Naive thymus-derived CD4-positive, alpha-beta T cell (primary cell): ENCODE measurements at regions of chr13 and their contacts with region 1.

Region 1: DNA sequence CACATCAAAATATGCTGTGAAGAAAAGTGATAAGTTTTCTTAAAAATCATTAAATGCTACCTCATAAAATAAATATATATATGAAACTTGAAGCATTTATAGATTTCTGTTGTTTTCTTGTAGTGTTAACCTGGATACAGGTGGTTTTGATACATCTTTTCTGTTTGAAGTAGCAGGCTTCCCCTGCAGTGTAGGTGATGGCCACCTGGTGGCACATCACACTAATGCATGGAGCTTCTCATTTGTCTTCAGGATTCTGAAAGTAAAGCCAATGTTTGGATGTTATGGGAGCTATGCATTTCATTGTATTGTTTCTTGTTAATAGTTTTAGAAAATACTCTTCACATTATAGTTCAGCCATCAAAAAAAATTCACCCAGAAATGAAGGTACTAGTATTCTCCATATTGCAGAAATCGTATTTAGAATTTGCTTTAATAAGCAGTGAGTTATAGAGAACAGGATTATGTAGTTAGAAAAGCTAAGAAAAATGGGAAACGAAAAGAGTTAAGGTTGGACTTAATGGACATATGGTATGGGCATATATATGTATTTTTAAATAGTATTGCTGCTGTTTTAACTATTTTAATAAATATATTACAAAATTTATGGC is 18.7 kb downstream of the GPR180 start:
- DNase-seq: peak in 3 of 9 donors; percentile 19 to 32 (median 26)
- ATAC-seq: peak; percentile 73
- H3K4me3 ChIP-seq: no peak overlapping the region
- H3K4me3 Mint-ChIP-seq: no peak overlapping the region
- H3K27ac ChIP-seq: no peak overlapping the region
- H3K27ac Mint-ChIP-seq: peak overlapping the region in 1 of 9 donors; percentile 8
- H3K4me1 ChIP-seq: no peaks in the 10 kb centered on the region
- H3K4me1 Mint-ChIP-seq: peaks cover 0 to 16% (median 13%) of the 10 kb centered on the region in 7 donors
- H3K27me3 ChIP-seq: no peaks in the 10 kb centered on the region
- H3K27me3 Mint-ChIP-seq: no peaks in the 10 kb centered on the region

Region 2: DNA sequence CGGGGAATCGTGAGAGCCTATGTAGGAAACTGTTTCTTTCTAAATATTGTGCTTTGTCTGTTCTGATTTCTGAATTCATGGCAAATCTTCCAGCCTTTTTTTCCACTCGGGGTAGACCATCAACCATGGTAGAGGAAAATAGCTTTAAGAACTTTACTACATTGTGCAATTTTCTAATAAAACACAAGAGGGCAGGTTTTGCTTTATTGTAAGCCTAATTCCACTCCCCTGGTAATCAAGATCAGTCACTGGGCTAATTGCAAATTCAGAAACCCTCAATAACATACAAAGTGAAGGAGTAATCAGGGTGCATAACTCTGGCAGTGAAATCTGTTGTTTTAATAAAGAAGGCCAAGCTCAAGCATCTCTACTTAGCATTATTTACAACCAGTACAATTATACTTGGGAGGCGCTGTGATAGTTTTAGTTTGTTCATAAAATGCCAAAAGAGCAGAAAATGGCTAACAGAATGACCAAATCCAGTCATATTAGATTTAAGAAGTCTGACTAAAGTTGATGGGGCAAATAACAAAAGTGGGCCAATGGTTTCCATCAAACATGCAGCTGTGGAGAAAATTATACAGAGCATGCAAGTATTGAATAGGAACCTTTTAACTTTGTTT is 184.7 kb before region 1 on chr13:
- CTCF ChIA-PET with region 1: interaction called, 273 read pairs
- POLR2A ChIA-PET with region 1: interaction called, 4 read pairs
- intact Hi-C with region 1: loop called (anchors 1 kb)
- DNase-seq: peak in 7 of 9 donors; percentile 18 to 63 (median 50)
- ATAC-seq: peak; percentile 73
- H3K4me3 ChIP-seq: no peak overlapping the region
- H3K4me3 Mint-ChIP-seq: no peak overlapping the region
- H3K27ac ChIP-seq: no peak overlapping the region
- H3K27ac Mint-ChIP-seq: no peak overlapping the region
- H3K4me1 ChIP-seq: no peaks in the 10 kb centered on the region
- H3K4me1 Mint-ChIP-seq: peaks cover 0 to 16% (median 0%) of the 10 kb centered on the region in 7 donors
- H3K27me3 ChIP-seq: no peaks in the 10 kb centered on the region
- H3K27me3 Mint-ChIP-seq: peaks cover 0 to 3% (median 0%) of the 10 kb centered on the region in 5 donors

Region 3: DNA sequence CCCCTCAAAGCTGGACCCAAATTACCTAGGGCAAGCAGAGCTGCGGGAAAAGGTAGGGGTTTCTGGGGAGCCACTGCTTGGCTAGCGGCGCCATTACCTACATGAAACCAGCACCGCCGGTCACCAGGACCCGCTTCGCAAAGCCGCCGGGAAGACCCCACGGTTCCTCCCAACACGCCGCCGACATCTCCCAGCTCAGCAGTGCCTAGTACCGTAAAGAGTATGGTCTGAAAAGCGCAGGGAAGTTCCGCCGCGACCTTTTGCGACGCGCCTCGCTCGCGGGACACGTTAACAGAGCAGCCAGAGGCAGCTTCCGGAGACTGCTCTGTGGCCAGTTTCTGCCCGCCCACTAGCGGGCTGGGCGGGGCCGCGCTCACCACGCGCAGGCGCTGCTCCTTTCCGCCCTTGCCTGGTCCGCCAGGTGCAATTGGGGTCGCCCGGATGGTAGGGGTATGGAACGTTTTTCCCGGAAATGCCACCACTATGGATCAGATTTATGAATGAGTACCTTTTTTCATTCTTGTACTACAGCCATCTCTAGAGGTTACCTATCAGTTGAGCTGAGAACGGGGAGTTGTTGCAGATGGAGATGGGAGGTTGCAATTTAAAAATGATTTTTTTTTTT is 24.3 kb before region 1 on chr13 and contains the start of gene TGDS:
- CTCF ChIA-PET with region 1: interaction called, 10 read pairs
- POLR2A ChIA-PET with region 1: interaction called, 3 read pairs
- intact Hi-C with region 1: loop called (anchors 1 to 2 kb)
- DNase-seq: peak; percentile 71 to 89 (median 86)
- ATAC-seq: peak; percentile 99
- H3K4me3 ChIP-seq: peak within 1 kb of the TSS; percentile 92
- H3K4me3 Mint-ChIP-seq: peak within 1 kb of the TSS; percentile 92 to 99 (median 97)
- H3K27ac ChIP-seq: peak within 1 kb of the TSS; percentile 80
- H3K27ac Mint-ChIP-seq: peak within 1 kb of the TSS; percentile 83 to 96 (median 93)
- H3K4me1 ChIP-seq: peaks cover 16 to 19% of the 10 kb centered on the region in 2 donors
- H3K4me1 Mint-ChIP-seq: peaks cover 29 to 53% (median 41%) of the 10 kb centered on the region in 7 donors
- H3K27me3 ChIP-seq: no peaks in the 10 kb centered on the region
- H3K27me3 Mint-ChIP-seq: no peaks in the 10 kb centered on the region
- total RNA-seq, gene TGDS: 5.9 to 20.5 (median 13.7) TPM

Region 4: DNA sequence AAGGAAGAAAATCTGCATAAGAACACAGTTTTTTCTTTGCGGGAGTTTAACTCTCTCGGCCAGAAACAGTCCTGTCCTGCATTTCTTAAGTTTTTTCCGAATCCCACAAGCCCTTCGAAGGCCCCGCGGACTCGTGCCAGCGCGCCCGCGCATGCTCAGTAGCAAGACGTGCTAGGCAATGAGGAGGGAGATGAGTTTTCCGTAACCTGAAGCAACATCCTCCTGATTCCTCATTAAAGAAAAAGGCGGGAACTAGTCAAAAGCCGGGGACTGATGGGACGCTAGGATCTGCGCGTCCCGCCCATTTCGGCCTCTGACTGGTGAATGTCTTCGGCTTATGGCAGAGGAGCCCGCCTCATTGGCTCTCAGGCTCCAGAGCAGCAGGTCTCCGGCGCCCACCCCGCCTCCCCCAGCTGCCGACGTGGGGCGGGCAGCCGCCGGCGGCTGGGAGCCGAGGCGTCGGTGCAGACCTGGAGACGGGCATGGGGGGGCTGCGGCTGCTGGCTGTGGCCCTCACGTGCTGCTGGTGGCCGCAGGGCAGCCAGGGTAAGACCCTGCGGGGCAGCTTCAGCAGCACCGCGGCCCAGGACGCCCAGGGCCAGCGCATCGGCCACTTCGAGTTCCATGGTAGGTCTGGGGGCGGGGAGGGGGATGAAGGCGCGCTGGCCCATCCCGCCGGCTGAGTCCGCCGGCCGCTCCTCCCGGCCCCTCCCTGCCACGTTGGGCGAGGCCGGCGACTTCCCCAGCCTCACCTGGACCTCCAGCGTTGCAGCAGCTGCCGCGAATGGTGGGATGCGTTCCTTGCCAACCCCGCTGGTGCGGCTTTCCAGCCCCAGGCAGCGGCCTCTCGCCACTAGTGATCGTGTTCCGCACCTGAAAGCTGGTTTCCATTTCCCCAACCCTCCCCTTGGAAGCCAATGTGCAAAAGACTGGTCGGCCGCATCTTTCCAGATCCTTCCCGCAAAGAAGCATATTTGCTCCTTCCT is 18.7 kb before region 1 on chr13 and contains the start of gene GPR180:
- CTCF ChIA-PET with region 1: interaction called, 18 read pairs
- POLR2A ChIA-PET with region 1: interaction called, 3 read pairs
- intact Hi-C with region 1: loop called (anchors 1 to 2 kb)
- DNase-seq: peak; percentile 67 to 92 (median 88)
- ATAC-seq: peak; percentile 99
- H3K4me3 ChIP-seq: peak within 1 kb of the TSS; percentile 58
- H3K4me3 Mint-ChIP-seq: peak within 1 kb of the TSS; percentile 79 to 90 (median 86)
- H3K27ac ChIP-seq: peak within 1 kb of the TSS; percentile 75
- H3K27ac Mint-ChIP-seq: peak within 1 kb of the TSS; percentile 82 to 90 (median 87)
- H3K4me1 ChIP-seq: peaks cover 0 to 10% of the 10 kb centered on the region in 2 donors
- H3K4me1 Mint-ChIP-seq: peaks cover 16 to 45% (median 32%) of the 10 kb centered on the region in 7 donors
- H3K27me3 ChIP-seq: no peaks in the 10 kb centered on the region
- H3K27me3 Mint-ChIP-seq: no peaks in the 10 kb centered on the region
- total RNA-seq, gene GPR180: 1.8 to 7.0 (median 5.4) TPM